ENCODE measurements at regions of chr3 and their contacts with region 1.

Region 1: DNA sequence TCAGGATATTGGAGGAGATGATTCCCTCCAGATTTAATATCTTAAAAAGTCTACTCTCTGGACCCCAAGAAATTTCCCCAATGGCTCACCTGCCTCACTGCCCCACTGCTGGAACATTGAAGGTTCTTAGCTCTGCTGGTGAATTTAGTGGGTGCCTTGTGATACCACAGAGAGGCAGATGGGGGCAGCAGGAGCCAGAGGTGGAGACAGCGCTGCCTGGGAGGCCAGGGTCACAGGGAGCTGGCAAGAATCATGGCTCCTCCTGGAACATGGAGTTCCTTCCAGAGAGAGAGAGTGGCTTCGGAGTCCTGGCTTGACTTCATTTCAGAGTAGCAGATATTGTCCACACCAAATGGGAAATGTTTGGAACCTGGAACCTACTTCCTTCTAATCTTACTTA is 263.5 kb upstream of the CFAP20DC start:
- DNase-seq: peak; percentile 13
- ATAC-seq: peak; percentile 79
- H3K4me3 ChIP-seq: no peak overlapping the region
- H3K27ac ChIP-seq: no peak overlapping the region
- H3K4me1 ChIP-seq: no peaks in the 10 kb centered on the region
- H3K27me3 ChIP-seq: no peaks in the 10 kb centered on the region
- CTCF ChIP-seq: peak; percentile 61
- POLR2A ChIP-seq: no peak
- RAD21 ChIP-seq: peak; percentile 70

Region 2: GRCh38 chr3:59559721-59560435 is 246.5 kb after region 1 on chr3:
- CTCF ChIA-PET with region 1: interaction called, 3 read pairs
- POLR2A ChIA-PET with region 1: no interaction called
- dilution Hi-C with region 1: no loop called
- in situ Hi-C with region 1: no loop called
- intact Hi-C with region 1: loop called (anchors 5 kb)
- DNase-seq: peak; percentile 97
- ATAC-seq: peak; percentile 90
- H3K4me3 ChIP-seq: no peak overlapping the region
- H3K27ac ChIP-seq: no peak overlapping the region
- H3K4me1 ChIP-seq: peaks cover 13% of the 10 kb centered on the region
- H3K27me3 ChIP-seq: no peaks in the 10 kb centered on the region
- CTCF ChIP-seq: no peak
- POLR2A ChIP-seq: no peak
- RAD21 ChIP-seq: no peak

Region 3: GRCh38 chr3:59818033-59818920 is 504.9 kb after region 1 on chr3:
- CTCF ChIA-PET with region 1: no interaction called
- POLR2A ChIA-PET with region 1: no interaction called
- dilution Hi-C with region 1: no loop called
- in situ Hi-C with region 1: no loop called
- intact Hi-C with region 1: no loop called
- DNase-seq: peak; percentile 97
- ATAC-seq: peak; percentile 88
- H3K4me3 ChIP-seq: no peak overlapping the region
- H3K27ac ChIP-seq: peak overlapping the region; percentile 84
- H3K4me1 ChIP-seq: peaks cover 9% of the 10 kb centered on the region
- H3K27me3 ChIP-seq: no peaks in the 10 kb centered on the region
- CTCF ChIP-seq: no peak
- POLR2A ChIP-seq: no peak
- RAD21 ChIP-seq: 0 out of 2 replicates have a peak, but pooled peaks have one; percentile 11

Region 4: GRCh38 chr3:60431599-60431958 is 1118.2 kb after region 1 on chr3:
- CTCF ChIA-PET with region 1: no interaction called
- POLR2A ChIA-PET with region 1: no interaction called
- dilution Hi-C with region 1: no loop called
- in situ Hi-C with region 1: no loop called
- intact Hi-C with region 1: loop called (anchors 10 kb)
- DNase-seq: peak; percentile 48
- ATAC-seq: peak; percentile 85
- H3K4me3 ChIP-seq: no peak overlapping the region
- H3K27ac ChIP-seq: no peak overlapping the region
- H3K4me1 ChIP-seq: no peaks in the 10 kb centered on the region
- H3K27me3 ChIP-seq: no peaks in the 10 kb centered on the region
- CTCF ChIP-seq: peak; percentile 28
- POLR2A ChIP-seq: no peak
- RAD21 ChIP-seq: peak; percentile 39

Region 5: DNA sequence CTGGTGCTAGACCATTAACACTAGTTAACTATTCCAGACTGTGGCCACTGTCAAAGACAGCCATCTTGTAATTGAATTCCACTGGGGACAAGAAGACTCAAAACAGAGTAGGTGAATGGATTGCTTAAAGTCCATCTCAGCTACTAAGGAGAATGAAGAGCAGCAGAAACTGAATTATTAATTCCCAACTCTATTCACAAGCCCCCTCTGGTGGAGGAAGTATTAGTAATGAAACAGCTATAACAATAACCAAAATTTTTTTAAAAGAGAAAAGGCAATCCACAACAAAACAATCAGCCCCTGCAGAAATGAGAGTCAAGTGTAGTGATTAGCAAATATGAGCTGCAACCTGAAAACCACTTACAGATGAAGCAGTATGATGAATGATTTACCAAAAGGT is 1635.1 kb after region 1 on chr3:
- CTCF ChIA-PET with region 1: no interaction called
- POLR2A ChIA-PET with region 1: no interaction called
- dilution Hi-C with region 1: no loop called
- in situ Hi-C with region 1: no loop called
- intact Hi-C with region 1: loop called (anchors 5 kb)
- DNase-seq: no peak
- ATAC-seq: no peak
- H3K4me3 ChIP-seq: no peak overlapping the region
- H3K27ac ChIP-seq: no peak overlapping the region
- H3K4me1 ChIP-seq: no peaks in the 10 kb centered on the region
- H3K27me3 ChIP-seq: no peaks in the 10 kb centered on the region
- CTCF ChIP-seq: peak; percentile 39
- POLR2A ChIP-seq: no peak
- RAD21 ChIP-seq: peak; percentile 35; the same call in 1 of the 2 replicates